ENCODE measurements at regions of chr9 and their contacts with region 1.

Region 1: DNA sequence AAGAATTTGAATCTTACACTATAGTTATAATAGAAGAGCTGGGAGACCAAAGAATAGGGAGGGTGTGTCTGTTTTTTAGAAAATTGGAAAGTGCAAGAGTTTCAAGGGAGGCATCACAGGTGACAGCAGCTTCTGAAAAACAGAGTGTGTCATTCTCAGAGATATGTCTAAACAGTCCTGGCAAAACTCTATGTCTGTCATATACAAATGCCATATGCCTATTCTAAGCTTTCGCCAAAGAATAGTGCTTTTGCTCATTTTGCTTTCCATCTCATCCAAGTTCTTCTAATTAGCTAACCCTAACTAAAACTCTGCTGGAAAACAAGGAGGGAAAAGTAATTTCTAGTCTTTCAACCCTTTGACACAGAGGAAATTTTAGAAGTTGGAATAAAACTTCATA is 388.0 kb upstream of the TYRP1 start:
- DNase-seq: no peak
- ATAC-seq: no peak
- H3K4me3 ChIP-seq: no peak overlapping the region
- H3K27ac ChIP-seq: no peak overlapping the region
- H3K4me1 ChIP-seq: no peaks in the 10 kb centered on the region
- H3K27me3 ChIP-seq: no peaks in the 10 kb centered on the region
- CTCF ChIP-seq: no peak

Region 2: GRCh38 chr9:12368569-12368968 is 63.4 kb after region 1 on chr9:
- intact Hi-C with region 1: loop called in 1 of 10 experiments (anchors 10 kb)
- DNase-seq: no peak
- ATAC-seq: no peak
- H3K4me3 ChIP-seq: no peak overlapping the region
- H3K27ac ChIP-seq: no peak overlapping the region
- H3K4me1 ChIP-seq: no peaks in the 10 kb centered on the region
- H3K27me3 ChIP-seq: no peaks in the 10 kb centered on the region
- CTCF ChIP-seq: no peak

Region 3: GRCh38 chr9:12819436-12820185 is 514.4 kb after region 1 on chr9:
- intact Hi-C with region 1: no loop called
- DNase-seq: no peak
- ATAC-seq: no peak
- H3K4me3 ChIP-seq: no peak overlapping the region
- H3K27ac ChIP-seq: peak overlapping the region in 2 of 10 donors; percentile 2 to 56
- H3K4me1 ChIP-seq: peaks cover 0 to 25% (median 14%) of the 10 kb centered on the region in 9 donors
- H3K27me3 ChIP-seq: no peaks in the 10 kb centered on the region
- CTCF ChIP-seq: peak; percentile 15 to 48 (median 30)